ENCODE measurements at regions of chr5 and their contacts with region 1.

Region 1: GRCh38 chr5:43305948-43306565 is 7.2 kb downstream of the HMGCS1 start:
- DNase-seq: no peak
- ATAC-seq: peak; percentile 60
- H3K4me3 Mint-ChIP-seq: no peak overlapping the region
- H3K27ac Mint-ChIP-seq: no peak overlapping the region
- H3K4me1 Mint-ChIP-seq: peaks cover 57% of the 10 kb centered on the region
- H3K27me3 Mint-ChIP-seq: no peaks in the 10 kb centered on the region
- CTCF ChIP-seq: no peak

Region 2: GRCh38 chr5:43073597-43074546 is 232.2 kb before region 1 on chr5:
- CTCF ChIA-PET with region 1: no interaction called
- POLR2A ChIA-PET with region 1: no interaction called
- intact Hi-C with region 1: loop called (anchors 2 kb)
- DNase-seq: no peak
- ATAC-seq: peak; percentile 75
- H3K4me3 Mint-ChIP-seq: no peak overlapping the region
- H3K27ac Mint-ChIP-seq: peak overlapping the region; percentile 38
- H3K4me1 Mint-ChIP-seq: peaks cover 26% of the 10 kb centered on the region
- H3K27me3 Mint-ChIP-seq: no peaks in the 10 kb centered on the region
- CTCF ChIP-seq: no peak

Region 3: DNA sequence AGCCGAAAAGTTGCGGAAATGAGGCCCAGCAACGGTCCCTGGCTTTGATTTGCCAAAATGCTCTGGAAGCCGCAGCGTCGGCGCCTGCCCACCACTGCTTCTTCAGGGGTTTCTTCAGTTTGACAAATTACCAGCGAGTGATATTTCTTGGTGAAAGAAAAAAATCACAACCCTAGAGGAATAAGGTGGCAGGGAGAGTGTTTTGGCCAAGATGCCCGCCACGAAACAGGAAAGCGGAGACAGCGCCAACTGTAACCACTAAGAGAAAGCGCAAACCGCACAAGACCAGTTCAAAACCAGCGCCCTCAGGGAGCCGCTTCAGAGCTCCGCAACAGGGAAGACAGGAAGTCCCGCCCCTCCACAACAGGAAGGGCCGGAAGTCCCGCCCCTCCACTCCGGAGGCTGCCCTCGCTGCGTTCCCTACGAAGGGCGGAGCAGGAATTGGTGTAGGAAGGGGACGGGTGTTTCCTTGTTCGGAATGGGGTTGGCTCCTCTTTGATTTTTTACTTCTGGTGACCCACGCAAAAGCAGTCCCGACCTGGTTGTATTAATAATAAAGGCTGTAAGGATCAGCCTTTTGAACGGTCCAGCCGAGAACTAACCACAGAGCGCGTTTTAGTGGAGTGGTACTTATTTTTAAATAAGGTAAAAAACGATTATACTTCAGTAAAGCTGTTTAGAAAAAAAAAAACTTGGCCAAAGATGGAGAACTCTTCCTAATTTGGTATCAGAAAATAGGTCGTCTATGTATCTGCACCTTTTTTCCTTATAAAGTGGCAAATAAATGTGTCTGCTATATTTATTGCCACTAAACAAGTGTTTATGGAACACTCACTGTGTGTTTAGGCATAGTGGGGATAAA is 209.0 kb after region 1 on chr5 and contains the start of gene C5orf34:
- CTCF ChIA-PET with region 1: no interaction called
- POLR2A ChIA-PET with region 1: no interaction called
- intact Hi-C with region 1: loop called (anchors 1 kb)
- DNase-seq: peak; percentile 92
- ATAC-seq: peak; percentile 96
- H3K4me3 Mint-ChIP-seq: peak within 1 kb of the TSS; percentile 95
- H3K27ac Mint-ChIP-seq: peak within 1 kb of the TSS; percentile 95
- H3K4me1 Mint-ChIP-seq: peaks cover 23% of the 10 kb centered on the region
- H3K27me3 Mint-ChIP-seq: no peaks in the 10 kb centered on the region
- CTCF ChIP-seq: no peak
- total RNA-seq, gene C5orf34: 4.4 and 4.7 TPM in 2 replicates